ENCODE measurements at regions of chr12 and their contacts with region 1.

Region 1: GRCh38 chr12:64390275-64390851 is at the start of gene C12orf56:
- DNase-seq: peak; percentile 63 to 84
- ATAC-seq: peak; percentile 90 to 93
- H3K4me3 ChIP-seq: peak within 1 kb of the TSS; percentile 51
- H3K27ac ChIP-seq: peak within 1 kb of the TSS; percentile 61 to 83; a peak in 5 of 6 replicates
- H3K4me1 ChIP-seq: no peaks in the 10 kb centered on the region
- CTCF ChIP-seq: 0 out of 3 replicates have a peak, but pooled peaks have one; percentile 10
- EP300 ChIP-seq: no peak
- POLR2A ChIP-seq: peak; percentile 50
- RAD21 ChIP-seq: peak in 1 of 2 experiments; percentile 11; a peak in 1 of 5 replicates
- polyA plus RNA-seq, gene C12orf56: 0.22 and 0.37 TPM in 2 replicates

Region 2: GRCh38 chr12:63826006-63826585 is 564.3 kb before region 1 on chr12:
- CTCF ChIA-PET with region 1: interaction called, 14 read pairs
- POLR2A ChIA-PET with region 1: no interaction called
- DNase-seq: peak; percentile 72 to 81
- ATAC-seq: peak; percentile 82 to 92
- H3K4me3 ChIP-seq: no peak overlapping the region
- H3K27ac ChIP-seq: no peak overlapping the region
- H3K4me1 ChIP-seq: 0 out of 3 replicates have a peak, but pooled peaks cover 4% of the 10 kb centered on the region
- CTCF ChIP-seq: peak; percentile 95
- EP300 ChIP-seq: no peak
- POLR2A ChIP-seq: no peak
- RAD21 ChIP-seq: peak; percentile 92 to 97

Measured in A549 (cell line).